ENCODE measurements at regions of chr2 and their contacts with region 1.

Region 1: DNA sequence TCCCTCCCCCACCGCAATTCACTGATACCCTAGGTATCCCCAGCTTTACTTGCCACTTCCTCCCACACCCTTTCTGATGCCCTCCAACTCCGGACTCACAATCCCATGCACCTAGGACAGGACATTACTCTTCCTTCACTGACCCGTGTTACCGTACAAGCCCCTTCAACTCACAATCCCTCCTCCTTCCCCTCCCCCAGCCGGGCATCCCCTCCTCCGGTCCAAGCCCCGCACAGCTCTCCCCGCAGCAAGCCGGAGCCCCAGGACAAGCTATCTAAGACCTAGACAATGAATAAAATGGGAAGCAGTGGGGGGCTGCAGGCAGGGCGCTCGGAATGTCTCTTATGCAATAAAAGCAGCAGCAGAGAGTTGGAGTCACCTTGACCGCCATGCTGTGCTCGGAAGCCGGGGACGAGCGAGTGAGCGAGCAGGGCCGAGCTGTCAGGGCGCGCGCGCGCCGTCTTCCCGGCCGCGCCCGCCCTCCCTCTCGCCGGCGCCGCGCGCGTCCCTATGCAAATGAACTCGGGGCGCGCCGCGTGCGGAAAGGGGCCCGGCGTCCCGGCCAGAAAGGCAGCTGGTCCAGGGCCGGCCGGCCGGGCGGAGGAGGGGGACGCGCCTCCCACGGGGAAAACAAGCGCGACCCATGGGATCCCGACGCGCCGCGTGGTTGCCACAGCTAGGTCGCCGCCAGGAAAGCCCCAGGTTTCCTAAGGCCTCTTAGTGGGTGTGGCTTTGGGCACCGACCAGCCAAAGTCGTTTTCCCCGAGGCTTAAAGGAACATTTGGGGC is at the start of gene SLC25A12:
- DNase-seq: peak; percentile 95
- ATAC-seq: peak; percentile 98
- total RNA-seq, gene SLC25A12: 106 TPM

Region 2: DNA sequence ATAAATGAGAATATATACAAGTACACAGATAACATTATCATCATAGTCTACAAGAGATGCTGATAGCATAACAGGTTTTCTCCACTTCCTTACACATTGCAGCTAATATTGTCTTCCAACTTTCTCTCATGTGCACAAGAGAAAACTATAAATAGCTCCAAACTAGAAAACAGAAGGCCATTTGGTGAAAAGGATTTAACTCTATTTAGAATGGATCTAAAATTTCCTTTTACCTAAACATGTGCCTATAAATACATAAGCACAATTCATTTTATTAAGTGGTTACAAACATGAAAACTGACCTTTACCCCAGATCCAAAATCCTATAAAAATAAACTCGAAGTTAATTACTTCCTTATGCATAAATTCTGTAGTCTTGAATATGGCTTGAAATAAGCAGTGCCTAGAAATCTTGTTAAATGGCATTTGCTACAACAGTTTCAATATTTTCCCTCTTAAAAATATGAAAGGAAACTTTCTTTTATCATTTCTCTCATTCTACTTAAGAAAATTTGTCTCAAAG is 41.6 kb before region 1 on chr2:
- intact Hi-C with region 1: loop called (anchors 5 kb)
- DNase-seq: no peak
- ATAC-seq: no peak

Region 3: GRCh38 chr2:171939743-171940071 is 45.7 kb after region 1 on chr2:
- intact Hi-C with region 1: no loop called
- DNase-seq: no peak
- ATAC-seq: no peak

Region 4: GRCh38 chr2:171957061-171957460 is 63.0 kb after region 1 on chr2:
- intact Hi-C with region 1: no loop called
- DNase-seq: no peak
- ATAC-seq: no peak

Measured in Right ventricle myocardium inferior (tissue), 1 donor.